Left ventricle myocardium superior (tissue), 1 donor: ENCODE measurements at regions of chr1 and their contacts with region 1.

Region 1: GRCh38 chr1:160428655-160429054 is 28.3 kb downstream of the VANGL2 start:
- DNase-seq: peak; percentile 62
- ATAC-seq: peak; percentile 81

Region 2: DNA sequence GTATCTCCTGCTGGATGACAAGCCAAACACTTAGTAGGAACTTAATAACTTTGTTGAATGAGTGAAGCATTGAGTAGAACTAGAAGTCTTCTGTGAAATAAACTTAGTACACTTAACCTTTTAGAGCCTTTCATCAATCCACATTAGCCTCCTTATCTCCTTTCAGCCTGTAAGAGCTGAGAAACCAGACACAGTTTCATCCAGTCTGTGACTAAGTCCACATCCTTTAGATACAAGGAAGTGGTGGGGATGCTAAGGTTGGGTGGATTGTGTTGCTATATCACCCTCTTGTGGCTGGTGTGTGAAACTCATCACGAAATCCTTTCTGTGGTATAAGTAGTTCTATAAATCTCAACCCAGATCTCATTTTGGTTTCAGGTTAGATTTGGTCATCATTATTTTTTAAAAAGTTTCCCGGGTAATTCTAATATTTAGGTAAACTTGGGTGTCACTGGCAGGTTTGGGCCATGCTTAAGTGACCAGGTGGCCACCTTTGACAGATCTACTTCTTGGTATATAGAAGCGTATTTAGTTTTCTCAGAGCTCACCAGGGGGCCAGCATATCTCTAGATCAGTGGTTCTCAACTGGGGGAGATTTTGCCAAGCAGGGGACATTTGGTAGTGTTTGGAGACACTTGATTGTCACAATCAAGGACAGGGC is 178.5 kb after region 1 on chr1:
- intact Hi-C with region 1: loop called (anchors 5 kb)
- DNase-seq: no peak
- ATAC-seq: peak; percentile 75

Region 3: GRCh38 chr1:161001525-161001924 is 572.9 kb after region 1 on chr1:
- intact Hi-C with region 1: no loop called
- DNase-seq: peak; percentile 49
- ATAC-seq: peak; percentile 40